ENCODE measurements at regions of chr7 and their contacts with region 1.

Region 1: GRCh38 chr7:56074371-56074791 is 10.3 kb downstream of the SUMF2 start:
- DNase-seq: peak; percentile 89
- ATAC-seq: peak; percentile 93

Region 2: GRCh38 chr7:55641273-55641691 is 433.1 kb before region 1 on chr7:
- intact Hi-C with region 1: loop called (anchors 10 kb)
- DNase-seq: no peak
- ATAC-seq: peak; percentile 85

Region 3: DNA sequence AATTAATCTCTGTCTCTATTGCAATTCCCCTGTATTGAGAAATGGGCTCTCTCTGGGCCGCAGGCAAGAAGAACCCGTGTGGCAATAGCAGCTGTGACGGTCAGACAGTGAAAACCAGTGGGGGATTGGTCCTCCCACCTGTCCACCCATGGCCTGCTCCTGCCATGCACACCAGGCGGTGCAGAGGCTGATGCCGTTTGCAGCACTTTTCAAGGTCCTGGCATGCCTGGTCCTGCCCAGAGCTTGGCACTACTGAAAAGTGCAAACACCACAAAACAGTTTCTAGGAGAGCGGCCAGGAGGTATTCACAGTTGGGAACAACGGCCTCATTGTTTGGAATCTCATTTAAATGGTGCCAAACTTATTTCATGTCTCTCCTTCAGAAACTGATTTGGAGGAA is 64.7 kb before region 1 on chr7:
- intact Hi-C with region 1: loop called (anchors 10 kb)
- DNase-seq: no peak
- ATAC-seq: peak; percentile 66

Region 4: DNA sequence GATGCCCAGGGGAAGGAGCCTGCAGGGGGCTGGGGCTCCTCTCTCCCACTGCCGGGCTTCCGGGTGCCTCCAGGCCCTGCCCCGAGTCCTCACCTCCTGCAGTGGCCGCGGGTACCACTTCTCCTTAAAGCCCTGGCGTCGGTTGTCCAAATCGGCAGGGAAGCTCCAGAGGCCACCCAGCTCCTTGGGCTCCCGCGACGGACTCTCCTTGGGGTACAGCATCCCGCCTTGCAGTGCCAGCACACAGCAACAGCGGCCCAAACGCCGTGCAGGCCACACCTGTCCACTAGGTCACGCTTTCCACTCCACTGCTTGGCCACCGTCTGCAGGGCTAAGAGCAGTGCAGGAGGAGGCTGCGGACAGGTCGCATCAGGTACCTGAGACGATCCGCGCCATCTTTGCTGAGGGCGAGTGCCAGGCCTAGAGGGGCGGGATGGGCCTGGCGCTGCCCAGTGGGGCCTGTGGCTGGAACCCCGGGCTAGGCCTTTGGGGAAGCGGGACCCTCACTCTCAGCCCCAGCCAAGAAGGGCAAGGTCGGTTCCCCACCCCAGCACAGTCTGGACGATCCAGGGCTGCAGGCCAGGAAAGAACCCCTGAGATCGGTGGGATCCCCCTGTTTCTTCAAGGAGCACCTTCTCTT is 1105.5 kb after region 1 on chr7:
- intact Hi-C with region 1: no loop called
- DNase-seq: peak; percentile 36
- ATAC-seq: no peak

Measured in sciatic nerve (tissue), 2 donors.